CD4-positive, alpha-beta memory T cell (primary cell): ENCODE measurements at regions of chr17 and their contacts with region 1.

Region 1: DNA sequence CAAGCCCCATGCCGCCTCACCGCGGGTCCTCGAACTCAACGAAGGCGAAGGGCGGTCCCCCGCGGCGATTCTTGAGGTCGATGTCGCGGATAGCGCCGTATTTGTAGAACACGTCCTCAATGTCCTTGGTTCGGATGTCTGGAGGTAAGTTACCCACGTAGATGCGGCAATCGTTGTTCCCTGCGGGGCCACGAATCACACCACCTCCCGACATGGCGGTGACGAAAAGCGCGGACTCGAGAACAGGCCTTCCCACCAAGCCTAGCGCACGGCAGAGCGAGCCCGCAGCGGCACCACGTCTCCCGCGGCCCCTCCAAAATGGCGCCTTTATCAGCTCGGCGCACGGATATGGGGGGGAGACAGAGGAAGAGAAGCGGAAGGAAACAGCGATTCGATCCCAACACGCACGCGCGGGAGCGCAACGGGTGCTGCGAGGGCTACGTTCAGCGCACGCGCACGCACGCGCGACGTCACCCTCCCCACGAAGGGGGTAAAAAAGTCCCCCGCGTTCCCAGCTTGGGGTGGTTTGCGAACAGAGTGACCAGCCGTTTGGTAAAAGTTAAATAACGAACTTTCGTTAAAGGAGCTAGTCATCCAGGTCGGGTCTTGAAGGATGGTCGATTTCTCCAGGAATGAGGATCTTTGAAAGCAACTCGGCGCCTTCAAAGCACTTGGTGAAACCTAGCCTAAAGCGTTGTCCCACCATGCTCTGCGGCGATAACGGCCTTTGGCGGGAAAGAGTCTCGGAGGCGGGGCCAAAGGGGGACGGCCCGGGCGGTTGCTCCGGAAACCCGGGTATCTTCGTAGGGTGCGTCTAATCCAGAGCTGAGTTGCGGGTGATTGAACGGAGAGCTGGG is at the start of gene SRSF1:
- DNase-seq: peak; percentile 98 to 99 (median 99)
- H3K4me3 ChIP-seq: peak within 1 kb of the TSS; percentile 96 to 98
- H3K4me3 Mint-ChIP-seq: peak within 1 kb of the TSS; percentile 96 to 100 (median 100)
- H3K27ac ChIP-seq: peak within 1 kb of the TSS; percentile 97
- H3K27ac Mint-ChIP-seq: peak within 1 kb of the TSS; percentile 98 to 100 (median 99)
- H3K4me1 ChIP-seq: peaks cover 46% of the 10 kb centered on the region
- H3K4me1 Mint-ChIP-seq: peaks cover 30 to 61% (median 44%) of the 10 kb centered on the region in 4 donors
- H3K27me3 ChIP-seq: no peaks in the 10 kb centered on the region
- H3K27me3 Mint-ChIP-seq: no peaks in the 10 kb centered on the region
- total RNA-seq, gene SRSF1: 242 to 257 TPM

Region 2: DNA sequence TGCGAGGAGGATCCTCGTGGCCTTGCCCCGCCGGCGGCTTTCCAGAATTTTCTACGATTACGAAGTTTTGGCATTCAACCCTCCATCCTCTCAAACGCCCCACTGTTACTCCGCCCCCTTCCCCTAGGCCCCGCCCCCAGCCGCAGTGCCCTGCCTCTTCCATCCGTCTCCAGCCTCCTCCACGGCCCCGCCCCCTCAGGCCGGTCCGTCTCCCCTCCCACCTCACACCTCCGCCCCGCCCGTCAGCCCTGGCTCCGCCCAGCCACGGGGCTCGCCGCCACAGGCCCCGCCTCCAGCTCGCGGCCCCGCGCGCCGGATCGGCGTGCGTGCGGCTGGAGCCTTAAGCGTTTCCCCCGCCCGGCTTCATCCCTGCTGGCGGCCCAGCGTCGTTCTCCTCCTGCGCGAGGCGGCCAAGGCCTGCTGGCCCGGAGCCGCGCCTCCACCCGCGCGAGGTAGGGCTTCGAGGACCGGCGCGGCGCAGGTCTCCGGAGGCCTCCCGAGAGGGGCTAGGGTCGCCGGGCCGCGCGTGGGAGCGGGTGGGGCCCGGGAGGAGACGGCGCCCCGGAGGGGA is 1173.3 kb before region 1 on chr17 and contains the starts of genes C17orf67 and DGKE:
- CTCF ChIA-PET with region 1: no interaction called
- POLR2A ChIA-PET with region 1: interaction called, 3 read pairs
- intact Hi-C with region 1: loop called (anchors 5 kb)
- DNase-seq: peak; percentile 98 to 99 (median 98)
- H3K4me3 ChIP-seq: peak within 1 kb of the TSS; percentile 49 to 88
- H3K4me3 Mint-ChIP-seq: peak within 1 kb of the TSS; percentile 95 to 98 (median 96)
- H3K27ac ChIP-seq: peak within 1 kb of the TSS; percentile 79
- H3K27ac Mint-ChIP-seq: peak within 1 kb of the TSS; percentile 92 to 97 (median 95)
- H3K4me1 ChIP-seq: peaks cover 67% of the 10 kb centered on the region
- H3K4me1 Mint-ChIP-seq: peaks cover 43 to 75% (median 57%) of the 10 kb centered on the region in 4 donors
- H3K27me3 ChIP-seq: no peaks in the 10 kb centered on the region
- H3K27me3 Mint-ChIP-seq: no peaks in the 10 kb centered on the region
- total RNA-seq, gene C17orf67: 9.5 to 11.2 TPM
- total RNA-seq, gene DGKE: 36.7 to 37.7 TPM

Region 3: GRCh38 chr17:57849874-57850754 is 157.0 kb before region 1 on chr17 and contains the start of gene MRPS23:
- CTCF ChIA-PET with region 1: interaction called, 202 read pairs
- POLR2A ChIA-PET with region 1: interaction called, 60 read pairs
- intact Hi-C with region 1: loop called (anchors 1 kb)
- DNase-seq: peak; percentile 94 to 99 (median 97)
- H3K4me3 ChIP-seq: peak within 1 kb of the TSS; percentile 75 to 87
- H3K4me3 Mint-ChIP-seq: peak within 1 kb of the TSS; percentile 96 to 99 (median 98)
- H3K27ac ChIP-seq: peak within 1 kb of the TSS; percentile 92
- H3K27ac Mint-ChIP-seq: peak within 1 kb of the TSS; percentile 98 to 100 (median 99)
- H3K4me1 ChIP-seq: peaks cover 32% of the 10 kb centered on the region
- H3K4me1 Mint-ChIP-seq: peaks cover 27 to 57% (median 35%) of the 10 kb centered on the region in 4 donors
- H3K27me3 ChIP-seq: no peaks in the 10 kb centered on the region
- H3K27me3 Mint-ChIP-seq: no peaks in the 10 kb centered on the region
- total RNA-seq, gene MRPS23: 28.7 to 29.5 TPM

Region 4: DNA sequence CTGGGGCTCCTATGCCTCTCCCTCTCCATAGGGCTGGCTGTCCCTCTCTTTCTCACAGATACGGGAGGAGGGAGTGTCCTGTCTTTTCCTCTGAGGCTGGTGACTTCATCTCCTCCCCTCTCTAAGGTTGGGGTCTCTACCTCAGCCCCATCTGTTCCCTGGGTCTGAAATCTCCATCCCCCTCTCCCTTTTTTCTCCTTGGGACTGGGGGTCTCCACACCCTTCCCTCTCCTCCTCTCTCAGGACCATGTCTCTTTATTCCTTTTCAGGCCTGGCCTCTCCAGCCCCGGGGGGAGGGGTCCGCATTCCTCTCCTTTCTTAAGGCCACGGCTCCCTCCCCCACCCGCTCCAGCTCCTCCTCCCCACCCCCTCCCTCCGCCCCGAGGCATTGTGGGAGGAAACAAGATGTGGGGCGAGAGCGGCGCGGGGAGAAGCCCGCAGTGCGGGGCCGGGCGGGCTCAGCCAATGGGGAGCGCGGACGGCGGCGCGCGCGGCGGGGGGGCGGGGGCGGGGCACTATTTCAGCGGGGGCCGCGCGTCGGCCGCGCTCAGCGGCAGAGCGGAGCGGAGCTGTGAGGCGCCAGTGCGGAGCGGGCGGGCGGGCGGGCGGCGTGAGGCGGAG is 75.8 kb after region 1 on chr17 and contains the start of gene DYNLL2:
- CTCF ChIA-PET with region 1: interaction called, 4 read pairs
- POLR2A ChIA-PET with region 1: interaction called, 44 read pairs
- intact Hi-C with region 1: loop called (anchors 1 kb)
- DNase-seq: peak; percentile 86 to 89 (median 88)
- H3K4me3 ChIP-seq: peak within 1 kb of the TSS; percentile 79 to 85
- H3K4me3 Mint-ChIP-seq: peak within 1 kb of the TSS; percentile 91 to 95 (median 94)
- H3K27ac ChIP-seq: peak within 1 kb of the TSS; percentile 80
- H3K27ac Mint-ChIP-seq: peak within 1 kb of the TSS; percentile 91 to 95 (median 93)
- H3K4me1 ChIP-seq: peaks cover 40% of the 10 kb centered on the region
- H3K4me1 Mint-ChIP-seq: peaks cover 20 to 41% (median 35%) of the 10 kb centered on the region in 4 donors
- H3K27me3 ChIP-seq: no peaks in the 10 kb centered on the region
- H3K27me3 Mint-ChIP-seq: peaks cover 0 to 10% of the 10 kb centered on the region in 2 donors
- total RNA-seq, gene DYNLL2: 45.6 to 45.8 TPM

Region 5: DNA sequence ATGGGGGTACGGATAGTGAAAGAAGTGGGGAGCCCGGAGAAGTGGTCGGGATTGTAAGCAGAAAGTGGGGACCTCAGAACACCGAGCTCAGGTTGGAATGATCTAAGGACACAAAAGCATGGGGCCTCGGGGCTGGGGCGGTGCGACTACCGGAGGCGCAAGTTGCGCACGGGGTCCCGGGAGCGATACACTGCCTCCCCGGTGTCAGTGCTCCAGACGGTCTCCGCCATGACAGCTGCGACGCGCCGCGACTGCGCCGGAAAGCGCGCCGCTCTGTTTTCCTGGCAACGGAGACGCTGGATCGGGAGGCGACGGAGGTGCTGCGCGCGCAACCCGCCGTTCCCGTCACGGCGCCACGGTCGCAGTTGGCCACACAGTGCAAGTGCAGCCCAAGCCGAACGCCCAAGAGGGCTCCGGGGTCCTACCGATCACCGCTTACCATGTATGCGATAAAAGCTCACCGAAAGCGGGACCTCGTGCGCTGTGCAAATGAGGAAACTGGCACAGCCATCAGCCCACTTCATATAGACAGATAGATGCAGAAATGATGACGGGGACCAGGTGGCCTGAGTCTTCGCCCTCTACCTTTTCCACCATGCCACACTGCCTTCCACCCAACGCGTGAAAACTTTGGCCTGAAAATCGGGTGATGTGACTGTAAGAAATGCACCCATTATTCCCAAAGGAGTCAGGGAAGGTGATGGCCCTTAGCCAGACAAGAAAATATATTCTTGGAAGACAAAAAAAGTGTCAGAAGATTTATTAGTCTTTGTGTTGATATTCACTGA is 212.0 kb after region 1 on chr17 and contains the start of gene MKS1:
- CTCF ChIA-PET with region 1: no interaction called
- POLR2A ChIA-PET with region 1: interaction called, 7 read pairs
- intact Hi-C with region 1: loop called (anchors 1 kb)
- DNase-seq: peak; percentile 94 to 96 (median 95)
- H3K4me3 ChIP-seq: peak within 1 kb of the TSS; percentile 71 to 88
- H3K4me3 Mint-ChIP-seq: peak within 1 kb of the TSS; percentile 91 to 99 (median 94)
- H3K27ac ChIP-seq: peak within 1 kb of the TSS; percentile 54
- H3K27ac Mint-ChIP-seq: peak within 1 kb of the TSS; percentile 94 to 99 (median 97)
- H3K4me1 ChIP-seq: peaks cover 15% of the 10 kb centered on the region
- H3K4me1 Mint-ChIP-seq: peaks cover 19 to 28% (median 23%) of the 10 kb centered on the region in 4 donors
- H3K27me3 ChIP-seq: no peaks in the 10 kb centered on the region
- H3K27me3 Mint-ChIP-seq: peaks cover 0 to 2% of the 10 kb centered on the region in 2 donors
- total RNA-seq, gene MKS1: 27.7 to 29.4 TPM

Region 6: DNA sequence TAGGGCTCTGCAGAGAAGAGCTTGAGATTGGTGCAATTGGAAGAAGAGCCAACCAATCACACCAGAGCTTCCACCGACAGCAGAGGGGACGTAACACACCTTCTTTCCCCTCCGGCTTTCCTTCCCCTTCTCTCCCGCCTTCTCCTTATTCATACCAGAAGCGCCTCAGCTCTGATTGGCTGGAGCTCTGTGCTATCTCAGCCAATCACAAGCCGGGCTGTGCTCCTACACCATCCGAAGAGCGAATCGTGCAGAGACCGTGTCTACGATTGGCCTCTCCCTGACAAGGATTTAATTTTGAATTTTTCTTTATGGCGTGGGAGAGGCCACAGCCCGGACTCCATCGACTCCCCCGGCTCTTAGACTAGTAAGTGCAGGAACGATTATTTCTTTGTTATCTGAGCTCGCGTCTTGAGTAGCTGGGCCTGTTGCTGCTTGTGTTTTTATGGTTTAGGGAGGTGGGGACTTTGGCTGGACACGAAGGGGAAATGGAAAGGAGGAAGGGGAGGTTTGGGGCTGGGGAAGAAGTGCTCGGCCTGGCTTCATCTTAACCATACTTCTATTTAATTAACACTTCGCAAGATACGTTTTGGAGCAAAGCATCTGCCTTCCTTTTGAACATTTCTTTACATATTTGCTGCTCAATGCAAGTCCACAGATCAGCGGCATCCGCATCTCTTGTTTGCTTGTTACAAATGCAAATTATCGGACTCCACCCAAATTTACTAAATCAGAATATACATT is 1148.5 kb after region 1 on chr17 and contains the start of gene PRR11:
- CTCF ChIA-PET with region 1: no interaction called
- POLR2A ChIA-PET with region 1: no interaction called
- intact Hi-C with region 1: loop called (anchors 5 kb)
- DNase-seq: peak in 3 of 5 donors; percentile 98 to 99 (median 99)
- H3K4me3 ChIP-seq: peak within 1 kb of the TSS; percentile 93 to 98
- H3K4me3 Mint-ChIP-seq: no peak within 1 kb of the TSS
- H3K27ac ChIP-seq: peak within 1 kb of the TSS; percentile 65
- H3K27ac Mint-ChIP-seq: no peak within 1 kb of the TSS
- H3K4me1 ChIP-seq: peaks cover 60% of the 10 kb centered on the region
- H3K4me1 Mint-ChIP-seq: peaks cover 25 to 53% (median 39%) of the 10 kb centered on the region in 4 donors
- H3K27me3 ChIP-seq: no peaks in the 10 kb centered on the region
- H3K27me3 Mint-ChIP-seq: no peaks in the 10 kb centered on the region
- total RNA-seq, gene PRR11: 0.93 to 2.1 TPM